Activated naive CD8-positive, alpha-beta T cell treated with anti-CD3 and anti-CD28 coated beads, Interleukin-2, amount 10 ng/mL, durations not matched to agents 7 days and 5 days (primary cell): ENCODE measurements at regions of chr7 and their contacts with region 1.

Region 1: DNA sequence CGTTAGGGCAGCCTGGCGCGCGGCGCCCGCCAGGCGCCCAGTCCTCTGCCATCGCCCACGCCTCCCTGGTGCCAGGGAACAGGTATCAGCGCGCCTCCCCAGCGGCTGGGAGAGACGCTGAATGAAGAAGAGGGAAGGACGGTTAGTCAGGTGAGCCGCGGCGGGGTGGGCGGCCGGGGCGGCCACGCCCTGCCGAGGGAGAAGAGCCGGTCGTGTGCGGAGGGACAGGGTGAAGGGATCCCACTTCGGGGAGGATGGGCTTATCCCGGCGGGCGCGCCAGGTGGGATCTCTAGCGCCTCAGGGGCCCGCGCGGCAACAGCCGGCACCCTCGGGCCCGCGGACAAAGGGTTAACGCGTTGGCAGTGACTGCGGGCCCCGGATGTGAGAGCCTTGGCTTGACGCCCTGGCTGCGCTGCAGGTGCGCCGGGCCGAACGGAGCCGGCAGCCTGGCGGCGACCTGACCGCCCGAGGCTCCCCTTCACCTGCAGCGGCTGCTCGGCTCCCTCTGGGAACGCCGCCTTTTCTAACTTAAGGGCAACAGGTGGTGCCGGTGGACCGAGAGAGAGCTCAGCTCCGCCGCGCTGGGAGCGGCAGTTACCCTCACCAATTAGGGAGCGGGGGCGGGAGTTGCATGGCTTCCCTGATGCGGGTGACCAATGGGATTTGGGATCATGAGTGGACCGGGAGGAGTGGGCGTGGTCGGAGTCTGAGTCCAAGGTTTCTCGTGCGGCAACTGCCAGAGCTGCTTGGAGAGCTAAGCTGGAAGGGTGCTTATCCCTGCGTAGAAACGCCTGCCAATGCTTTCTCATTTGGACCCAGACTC is at the start of gene ARL4A:
- DNase-seq: peak; percentile 88
- ATAC-seq: peak; percentile 72
- H3K4me3 Mint-ChIP-seq: peak within 1 kb of the TSS; percentile 94
- H3K27ac Mint-ChIP-seq: peak within 1 kb of the TSS; percentile 87
- H3K4me1 Mint-ChIP-seq: peaks cover 22% of the 10 kb centered on the region
- H3K27me3 Mint-ChIP-seq: no peaks in the 10 kb centered on the region
- total RNA-seq, gene ARL4A: 11.7 to 12.0 TPM

Region 2: GRCh38 chr7:12731214-12731656 is 44.1 kb after region 1 on chr7:
- POLR2A ChIA-PET with region 1: interaction called, 18 read pairs
- DNase-seq: no peak
- ATAC-seq: peak; percentile 72
- H3K4me3 Mint-ChIP-seq: peak overlapping the region; percentile 65
- H3K27ac Mint-ChIP-seq: peak overlapping the region; percentile 86
- H3K4me1 Mint-ChIP-seq: peaks cover 8% of the 10 kb centered on the region
- H3K27me3 Mint-ChIP-seq: no peaks in the 10 kb centered on the region